ENCODE measurements at regions of chr12 and their contacts with region 1.

Region 1: GRCh38 chr12:113912760-113913329 is 53.3 kb downstream of the RBM19 start:
- DNase-seq: peak; percentile 55
- H3K4me3 ChIP-seq: no peak overlapping the region
- H3K27ac ChIP-seq: no peak overlapping the region
- H3K4me1 ChIP-seq: no peaks in the 10 kb centered on the region
- H3K27me3 ChIP-seq: no peaks in the 10 kb centered on the region
- CTCF ChIP-seq: peak; percentile 80

Region 2: DNA sequence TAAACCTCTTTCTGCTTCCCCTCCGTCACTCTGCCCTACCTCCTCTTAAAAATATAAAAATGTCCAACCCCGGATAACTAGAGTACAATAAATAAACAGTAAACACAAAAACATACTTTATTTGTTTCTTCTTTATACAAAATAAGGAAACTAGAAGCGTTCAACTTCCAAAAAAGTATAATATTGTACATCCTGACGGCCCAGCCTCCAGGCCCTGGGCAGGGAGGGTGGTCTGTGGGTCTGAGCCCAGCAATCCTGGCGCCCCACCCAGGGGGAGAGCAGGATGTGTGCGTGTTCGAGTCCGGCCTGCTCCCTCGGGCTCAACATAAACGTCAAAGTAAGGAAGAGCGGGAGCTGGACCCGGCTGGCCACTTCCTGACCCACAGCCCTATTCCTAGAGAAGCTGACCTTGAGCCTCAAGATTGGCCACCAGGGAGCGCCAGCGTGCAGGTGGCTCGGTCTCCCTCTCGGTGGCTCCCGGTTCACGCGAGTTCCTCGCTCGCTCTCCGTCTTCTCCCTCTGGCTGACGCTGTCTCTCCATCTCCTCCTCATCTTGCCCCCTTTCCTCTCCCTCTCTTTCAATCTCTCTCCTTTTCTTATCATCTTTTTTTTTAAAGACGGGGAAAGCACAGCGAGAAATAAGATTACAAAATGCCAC is 450.6 kb before region 1 on chr12:
- intact Hi-C with region 1: loop called (anchors 5 kb)
- DNase-seq: peak; percentile 78
- H3K4me3 ChIP-seq: peak overlapping the region; percentile 7
- H3K27ac ChIP-seq: no peak overlapping the region
- H3K4me1 ChIP-seq: no peaks in the 10 kb centered on the region
- H3K27me3 ChIP-seq: peaks cover 55% of the 10 kb centered on the region
- CTCF ChIP-seq: peak; percentile 76